B cell (primary cell): ENCODE measurements at regions of chr2 and their contacts with region 1.

Region 1: DNA sequence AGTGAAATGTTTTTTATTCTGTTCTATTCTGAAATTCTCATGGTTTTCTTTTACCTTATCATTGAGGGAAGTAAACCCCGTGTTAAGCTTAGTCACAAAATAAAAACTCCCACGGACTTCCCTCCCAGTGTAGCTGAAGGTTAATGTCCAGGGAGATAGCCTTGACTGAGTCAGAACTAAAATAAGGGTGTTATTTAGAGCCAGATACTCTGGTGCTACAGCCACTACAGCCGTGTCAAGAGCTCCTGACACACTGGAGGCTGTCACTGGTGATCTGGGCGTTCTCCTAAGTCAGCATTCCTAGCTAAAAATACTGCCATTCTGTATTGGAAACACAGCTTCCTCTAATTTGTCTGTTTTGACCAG is 82.0 kb upstream of the RANBP2 start:
- DNase-seq: no peak
- ATAC-seq: no peak
- H3K4me3 ChIP-seq: no peak overlapping the region
- H3K4me3 Mint-ChIP-seq: no peak overlapping the region
- H3K27ac ChIP-seq: no peak overlapping the region
- H3K27ac Mint-ChIP-seq: no peak overlapping the region
- H3K4me1 ChIP-seq: peaks cover 4 to 6% of the 10 kb centered on the region in 2 donors
- H3K4me1 Mint-ChIP-seq: peaks cover 15% of the 10 kb centered on the region
- H3K27me3 ChIP-seq: no peaks in the 10 kb centered on the region
- H3K27me3 Mint-ChIP-seq: peaks cover 5% of the 10 kb centered on the region
- CTCF ChIP-seq: no peak

Region 2: GRCh38 chr2:108594132-108594981 is 42.9 kb before region 1 on chr2:
- CTCF ChIA-PET with region 1: interaction called, 39 read pairs
- POLR2A ChIA-PET with region 1: interaction called, 9 read pairs
- intact Hi-C with region 1: loop called (anchors 5 kb)
- DNase-seq: peak; percentile 62
- ATAC-seq: peak; percentile 69
- H3K4me3 ChIP-seq: no peak overlapping the region
- H3K4me3 Mint-ChIP-seq: peak overlapping the region; percentile 62
- H3K27ac ChIP-seq: peak overlapping the region in 1 of 2 donors; percentile 24
- H3K27ac Mint-ChIP-seq: peak overlapping the region; percentile 77
- H3K4me1 ChIP-seq: peaks cover 49 to 50% of the 10 kb centered on the region in 2 donors
- H3K4me1 Mint-ChIP-seq: peaks cover 69% of the 10 kb centered on the region
- H3K27me3 ChIP-seq: no peaks in the 10 kb centered on the region
- H3K27me3 Mint-ChIP-seq: no peaks in the 10 kb centered on the region
- CTCF ChIP-seq: no peak

Region 3: DNA sequence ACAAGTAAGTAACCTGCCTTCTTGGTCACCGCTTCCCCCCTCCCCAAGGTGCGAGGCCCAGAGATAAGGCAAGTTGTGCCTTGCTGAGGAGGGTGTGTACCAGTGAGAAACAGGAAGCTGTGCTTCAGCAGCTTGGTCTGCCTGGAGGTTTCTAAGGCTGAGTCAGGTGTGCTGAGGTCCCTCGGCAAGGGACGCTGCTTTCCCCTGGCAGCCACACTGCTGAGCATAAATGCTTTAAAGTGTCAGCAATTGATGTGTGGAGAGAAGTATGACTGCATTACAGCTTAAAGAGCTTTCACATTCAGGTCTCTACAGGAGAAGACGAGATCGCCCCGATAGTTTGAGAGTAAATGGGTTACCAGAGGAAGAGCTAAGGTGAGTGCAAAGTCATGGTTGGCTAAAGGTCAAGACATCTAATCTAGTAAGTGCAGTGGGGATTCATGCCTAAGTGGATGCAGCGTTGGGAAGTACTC is 16.2 kb before region 1 on chr2:
- CTCF ChIA-PET with region 1: interaction called, 290 read pairs
- POLR2A ChIA-PET with region 1: interaction called, 5 read pairs
- intact Hi-C with region 1: loop called (anchors 1 kb)
- DNase-seq: peak; percentile 81
- ATAC-seq: peak; percentile 99
- H3K4me3 ChIP-seq: peak overlapping the region in 4 of 5 experiments; percentile 30 to 72 (median 42)
- H3K4me3 Mint-ChIP-seq: peak overlapping the region; percentile 77
- H3K27ac ChIP-seq: peak overlapping the region; percentile 58 to 69
- H3K27ac Mint-ChIP-seq: peak overlapping the region; percentile 84
- H3K4me1 ChIP-seq: peaks cover 51 to 53% of the 10 kb centered on the region in 2 donors
- H3K4me1 Mint-ChIP-seq: peaks cover 53% of the 10 kb centered on the region
- H3K27me3 ChIP-seq: no peaks in the 10 kb centered on the region
- H3K27me3 Mint-ChIP-seq: no peaks in the 10 kb centered on the region
- CTCF ChIP-seq: no peak